SK-N-SH (cell line): ENCODE measurements at regions of chr1 and their contacts with region 1.

Region 1: DNA sequence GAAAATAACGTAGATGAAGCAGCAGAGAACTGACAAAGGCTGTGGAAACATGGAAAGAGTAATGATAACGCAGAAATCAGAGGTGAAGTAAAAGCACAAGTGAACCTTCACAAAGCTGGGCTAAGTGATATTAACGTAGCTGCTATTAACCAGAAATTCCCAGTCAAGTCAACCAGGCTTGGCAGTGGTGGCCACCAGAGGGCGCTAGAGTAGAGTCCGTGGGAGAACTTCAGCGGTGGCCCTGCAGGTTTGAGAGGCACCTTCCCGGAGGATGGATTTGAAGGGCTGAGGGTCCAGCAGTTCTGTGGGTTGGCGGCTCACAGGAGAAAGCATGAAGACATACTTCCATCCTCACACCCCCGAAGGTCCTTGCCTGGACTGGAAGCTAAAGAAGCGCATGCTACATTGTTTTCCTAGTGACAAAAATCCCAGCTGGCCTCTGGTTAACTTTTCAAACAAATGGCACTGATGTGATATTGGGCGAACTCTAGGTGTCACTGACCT is 81.7 kb upstream of the ZNF648 start:
- DNase-seq: peak; percentile 75
- H3K4me3 ChIP-seq: peak overlapping the region in 1 of 2 experiments; percentile 54; a peak in 1 of 4 replicates
- H3K27ac ChIP-seq: no peak overlapping the region; a peak in 1 of 4 replicates
- H3K4me1 ChIP-seq: peaks cover 0 to 14% of the 10 kb centered on the region in 2 experiments; a peak in 1 of 4 replicates
- H3K27me3 ChIP-seq: no peaks in the 10 kb centered on the region
- CTCF ChIP-seq: peak; percentile 73
- EP300 ChIP-seq: no peak
- RAD21 ChIP-seq: peak; percentile 86

Region 2: DNA sequence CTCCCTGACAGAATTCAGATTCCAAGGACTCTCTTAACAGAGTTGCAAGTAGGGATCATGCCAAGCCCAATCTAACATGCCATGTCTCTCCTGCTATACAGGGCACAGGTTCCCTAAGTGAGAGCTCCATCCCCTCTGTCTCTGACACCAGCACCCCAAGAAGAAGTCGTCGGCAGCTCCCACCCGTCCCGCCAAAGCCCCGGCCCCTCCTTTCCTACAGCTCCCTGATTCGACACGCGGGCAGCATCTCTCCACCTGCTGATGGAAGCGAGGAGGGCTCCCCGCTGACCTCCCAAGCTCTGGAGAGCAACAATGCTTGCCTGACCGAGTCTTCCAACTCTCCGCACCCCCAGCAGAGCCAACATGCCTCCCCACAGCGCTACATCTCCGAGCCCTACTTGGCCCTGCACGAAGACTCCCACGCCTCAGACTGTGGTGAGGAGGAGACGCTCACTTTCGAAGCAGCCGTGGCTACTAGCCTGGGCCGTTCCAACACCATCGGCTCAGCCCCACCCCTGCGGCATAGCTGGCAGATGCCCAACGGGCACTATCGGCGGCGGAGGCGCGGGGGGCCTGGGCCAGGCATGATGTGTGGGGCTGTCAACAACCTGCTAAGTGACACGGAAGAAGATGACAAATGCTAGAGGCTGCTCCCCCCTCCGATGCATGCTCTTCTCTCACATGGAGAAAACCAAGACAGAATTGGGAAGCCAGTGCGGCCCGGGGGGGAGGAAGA is 344.8 kb before region 1 on chr1:
- CTCF ChIA-PET with region 1: no interaction called
- POLR2A ChIA-PET with region 1: no interaction called
- DNase-seq: no peak
- H3K4me3 ChIP-seq: no peak overlapping the region
- H3K27ac ChIP-seq: no peak overlapping the region
- H3K4me1 ChIP-seq: no peaks in the 10 kb centered on the region
- H3K27me3 ChIP-seq: no peaks in the 10 kb centered on the region
- CTCF ChIP-seq: no peak
- EP300 ChIP-seq: no peak
- RAD21 ChIP-seq: no peak

Region 3: GRCh38 chr1:181936768-181937581 is 206.2 kb before region 1 on chr1:
- CTCF ChIA-PET with region 1: no interaction called
- POLR2A ChIA-PET with region 1: no interaction called
- DNase-seq: peak; percentile 47
- H3K4me3 ChIP-seq: no peak overlapping the region; a peak in 1 of 4 replicates
- H3K27ac ChIP-seq: no peak overlapping the region
- H3K4me1 ChIP-seq: no peaks in the 10 kb centered on the region
- H3K27me3 ChIP-seq: no peaks in the 10 kb centered on the region
- CTCF ChIP-seq: 0 out of 2 replicates have a peak, but pooled peaks have one; percentile 19
- EP300 ChIP-seq: no peak
- RAD21 ChIP-seq: peak; percentile 62

Region 4: DNA sequence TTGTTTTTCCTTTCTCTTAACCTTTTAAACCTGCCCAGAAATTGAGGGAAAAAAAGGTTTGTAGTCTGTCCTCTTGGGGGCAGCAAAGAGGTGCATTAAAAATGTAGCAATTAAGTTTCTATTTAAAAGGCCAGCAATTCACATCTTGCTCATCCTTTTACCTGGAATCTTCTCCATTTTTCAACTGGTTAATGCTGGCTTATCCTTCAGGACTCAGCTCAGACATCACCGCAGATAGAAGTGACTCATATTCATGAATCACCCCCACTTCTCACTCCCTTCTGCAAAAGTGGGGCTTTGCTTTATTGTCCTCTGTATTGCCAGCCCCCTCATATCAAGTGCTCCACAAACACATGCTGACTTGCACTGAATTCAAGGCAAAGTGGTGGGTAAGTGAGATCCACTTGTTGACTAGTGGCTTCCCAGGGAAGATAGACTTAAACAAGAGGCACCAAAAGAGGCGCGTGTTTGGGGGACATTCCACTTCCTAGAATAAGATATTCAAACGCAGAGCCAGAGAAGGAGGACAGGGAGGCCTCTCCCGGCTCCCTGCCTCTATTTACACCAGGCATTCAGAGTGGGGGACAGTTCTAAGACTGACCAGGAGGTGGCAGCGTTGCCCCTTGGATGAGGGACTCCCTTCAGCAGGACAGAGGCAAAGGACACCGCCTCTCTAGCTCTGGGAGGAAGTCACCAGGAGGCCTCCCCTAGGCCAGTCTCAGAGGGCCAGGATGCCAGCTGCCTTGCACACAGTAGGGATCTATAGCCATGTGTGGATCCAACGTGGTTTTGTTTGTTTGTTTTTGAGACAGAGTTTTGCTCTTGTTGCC is 58.5 kb before region 1 on chr1:
- CTCF ChIA-PET with region 1: interaction called, 33 read pairs
- POLR2A ChIA-PET with region 1: interaction called, 3 read pairs
- DNase-seq: peak; percentile 81
- H3K4me3 ChIP-seq: peak overlapping the region in 1 of 2 experiments; percentile 40; a peak in 1 of 4 replicates
- H3K27ac ChIP-seq: no peak overlapping the region
- H3K4me1 ChIP-seq: no peaks in the 10 kb centered on the region; a peak in 1 of 4 replicates
- H3K27me3 ChIP-seq: no peaks in the 10 kb centered on the region
- CTCF ChIP-seq: peak; percentile 56
- EP300 ChIP-seq: no peak
- RAD21 ChIP-seq: peak; percentile 84

Region 5: DNA sequence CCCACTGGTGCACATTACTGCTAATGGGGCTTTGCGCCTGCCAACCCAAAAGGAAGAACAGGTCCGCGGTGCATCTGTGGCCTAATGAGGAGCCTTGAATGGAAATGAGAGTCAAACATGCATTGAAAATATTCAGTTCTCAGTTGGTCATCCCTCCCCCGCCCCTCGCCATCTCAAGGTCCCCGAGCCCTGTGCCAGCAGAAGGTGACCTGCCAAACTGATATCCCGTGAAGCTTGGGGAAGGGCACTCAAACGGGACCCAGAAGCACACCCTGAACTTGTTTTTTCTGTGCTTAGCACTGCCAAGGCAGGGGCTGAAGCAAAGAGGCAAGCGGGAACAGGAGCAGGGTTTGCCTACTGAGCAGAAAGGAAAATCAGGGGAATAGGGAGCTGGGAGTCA is 13.8 kb before region 1 on chr1:
- CTCF ChIA-PET with region 1: interaction called, 69 read pairs
- POLR2A ChIA-PET with region 1: no interaction called
- DNase-seq: no peak
- H3K4me3 ChIP-seq: no peak overlapping the region
- H3K27ac ChIP-seq: no peak overlapping the region
- H3K4me1 ChIP-seq: no peaks in the 10 kb centered on the region
- H3K27me3 ChIP-seq: no peaks in the 10 kb centered on the region
- CTCF ChIP-seq: no peak
- EP300 ChIP-seq: no peak
- RAD21 ChIP-seq: no peak

Region 6: DNA sequence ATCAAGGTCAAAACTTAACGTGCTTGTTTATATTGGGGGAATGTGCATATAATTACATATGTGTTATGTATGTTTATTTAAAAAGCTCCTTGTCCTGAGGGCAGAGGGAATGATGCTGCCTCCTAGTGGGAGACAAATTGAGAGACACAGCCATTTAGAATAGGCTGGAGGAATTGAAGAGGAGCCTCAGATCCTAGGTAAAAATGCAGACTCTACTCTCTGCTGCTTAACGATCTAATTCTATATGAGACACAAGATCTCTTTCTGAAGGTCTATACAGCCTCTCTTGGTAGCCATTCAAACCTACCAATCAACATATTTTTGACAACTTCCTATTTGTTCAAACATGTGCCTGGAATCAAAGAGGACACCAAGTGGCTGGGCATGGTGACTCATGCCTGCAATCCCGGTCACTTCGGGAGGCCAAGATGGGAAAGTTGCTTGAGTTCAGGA is 54.9 kb after region 1 on chr1:
- CTCF ChIA-PET with region 1: interaction called, 25 read pairs
- POLR2A ChIA-PET with region 1: no interaction called
- DNase-seq: no peak
- H3K4me3 ChIP-seq: no peak overlapping the region
- H3K27ac ChIP-seq: no peak overlapping the region
- H3K4me1 ChIP-seq: no peaks in the 10 kb centered on the region
- H3K27me3 ChIP-seq: no peaks in the 10 kb centered on the region
- CTCF ChIP-seq: no peak
- EP300 ChIP-seq: no peak
- RAD21 ChIP-seq: no peak

Region 7: DNA sequence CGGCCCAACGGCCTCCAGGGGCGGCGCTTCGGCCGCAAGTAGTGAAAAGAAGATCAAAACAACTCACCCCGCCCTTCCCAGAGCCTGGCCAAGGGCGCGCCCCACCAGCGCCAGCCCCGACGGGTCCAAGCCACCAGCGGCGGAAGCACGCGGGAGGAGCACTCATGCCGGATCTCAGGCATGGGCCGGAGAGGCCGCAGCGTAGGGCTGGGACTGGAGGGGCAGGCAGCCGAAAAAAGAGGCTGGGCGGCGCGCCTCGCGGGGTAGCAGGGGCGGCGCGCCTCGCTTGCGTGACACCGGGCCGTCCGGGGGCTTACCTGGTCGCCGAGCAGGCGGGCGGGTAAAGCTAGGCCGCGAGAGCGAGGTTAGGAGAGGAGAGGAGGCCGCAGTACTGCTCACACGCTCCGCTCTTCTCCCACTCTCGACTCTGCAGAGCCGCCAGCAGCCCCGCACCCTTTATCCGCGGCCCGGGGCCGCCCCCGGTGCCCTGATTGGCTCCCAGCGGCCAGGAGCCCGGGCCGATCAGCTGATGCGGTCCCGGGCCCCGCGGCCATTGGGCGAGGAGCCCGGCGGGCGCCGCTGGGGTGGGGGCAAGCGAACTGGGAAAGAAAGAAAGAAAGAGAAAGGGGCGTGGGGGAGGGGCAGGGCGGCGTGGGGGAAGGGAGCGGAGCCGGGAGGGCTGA is 248.3 kb after region 1 on chr1 and contains the start of gene GLUL:
- CTCF ChIA-PET with region 1: interaction called, 350 read pairs
- POLR2A ChIA-PET with region 1: interaction called, 31 read pairs
- DNase-seq: peak; percentile 98
- H3K4me3 ChIP-seq: peak within 1 kb of the TSS; percentile 95 to 99
- H3K27ac ChIP-seq: peak within 1 kb of the TSS; percentile 84 to 95
- H3K4me1 ChIP-seq: peaks cover 0 to 11% of the 10 kb centered on the region in 2 experiments; a peak in 3 of 4 replicates
- H3K27me3 ChIP-seq: no peaks in the 10 kb centered on the region
- CTCF ChIP-seq: no peak
- EP300 ChIP-seq: no peak
- RAD21 ChIP-seq: no peak
- polyA plus RNA-seq, gene GLUL: 107 TPM in 2 replicates

Region 8: GRCh38 chr1:182556279-182556678 is 413.1 kb after region 1 on chr1:
- CTCF ChIA-PET with region 1: no interaction called
- POLR2A ChIA-PET with region 1: no interaction called
- DNase-seq: no peak
- H3K4me3 ChIP-seq: no peak overlapping the region
- H3K27ac ChIP-seq: no peak overlapping the region
- H3K4me1 ChIP-seq: no peaks in the 10 kb centered on the region
- H3K27me3 ChIP-seq: no peaks in the 10 kb centered on the region
- CTCF ChIP-seq: no peak
- EP300 ChIP-seq: no peak
- RAD21 ChIP-seq: no peak